Transverse colon (tissue), 4 donors: ENCODE measurements at regions of chr11 and their contacts with region 1.

Region 1: GRCh38 chr11:73779084-73779902 is 8.4 kb upstream of the MRPL48 start:
- DNase-seq: peak; percentile 98
- H3K4me3 ChIP-seq: peak overlapping the region; percentile 46 to 70 (median 58)
- H3K27ac ChIP-seq: peak overlapping the region; percentile 91 to 96 (median 95)
- H3K4me1 ChIP-seq: peaks cover 4 to 10% (median 7%) of the 10 kb centered on the region in 4 donors
- H3K27me3 ChIP-seq: no peaks in the 10 kb centered on the region
- CTCF ChIP-seq: peak in 1 of 5 experiments; percentile 31
- EP300 ChIP-seq: no peak
- POLR2A ChIP-seq: peak; percentile 65

Region 2: DNA sequence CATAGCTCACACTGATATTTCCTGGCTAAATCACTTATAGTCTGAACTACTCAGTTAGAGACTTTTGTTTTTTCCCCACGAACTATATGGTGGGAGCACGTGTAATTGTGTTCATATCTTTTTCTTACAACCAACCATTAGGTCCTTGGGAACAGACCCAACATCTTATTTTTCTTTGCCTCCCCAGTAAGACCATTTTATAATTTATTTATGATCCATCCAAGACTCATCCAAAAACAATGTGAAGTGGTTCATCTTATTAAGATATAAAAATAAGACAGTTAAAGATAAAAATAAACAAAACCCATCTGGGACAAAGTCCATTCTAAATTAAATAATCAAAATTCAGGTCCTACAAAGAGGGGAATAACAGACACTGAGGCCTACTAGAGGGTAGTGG is 272.2 kb before region 1 on chr11:
- in situ Hi-C with region 1: no loop called
- intact Hi-C with region 1: no loop called
- DNase-seq: no peak
- H3K4me3 ChIP-seq: no peak overlapping the region
- H3K27ac ChIP-seq: no peak overlapping the region
- H3K4me1 ChIP-seq: no peaks in the 10 kb centered on the region
- H3K27me3 ChIP-seq: no peaks in the 10 kb centered on the region
- CTCF ChIP-seq: no peak
- EP300 ChIP-seq: no peak
- POLR2A ChIP-seq: no peak

Region 3: DNA sequence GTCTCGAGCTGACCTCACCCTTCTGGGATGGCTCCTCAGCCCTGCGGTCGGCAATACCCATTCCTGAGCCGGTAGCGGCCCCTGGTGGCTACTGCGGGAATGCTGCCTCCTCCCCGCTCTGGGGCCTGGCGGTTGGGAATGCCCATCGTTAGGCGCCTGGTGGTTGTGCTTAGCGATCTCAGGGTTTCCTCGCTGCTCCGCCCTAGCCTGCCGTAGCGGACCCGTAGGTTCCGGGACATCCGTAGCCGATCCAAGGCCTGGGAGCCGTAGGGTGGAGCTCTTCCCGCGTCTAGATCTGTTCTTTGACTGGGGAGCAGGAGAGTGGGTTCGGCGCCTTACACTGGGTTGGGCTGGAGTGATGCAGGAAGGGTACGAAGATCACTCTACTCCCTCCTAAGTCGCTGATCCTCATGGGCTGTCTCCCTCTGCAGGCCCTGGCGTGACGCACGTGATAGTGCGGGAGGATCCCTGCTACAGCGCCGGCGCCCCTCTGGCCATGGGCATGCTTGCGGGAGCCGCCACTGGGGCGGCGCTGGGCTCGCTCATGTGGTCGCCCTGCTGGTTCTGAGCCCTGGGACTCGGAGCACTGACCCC is 118.2 kb before region 1 on chr11:
- in situ Hi-C with region 1: no loop called
- intact Hi-C with region 1: no loop called
- DNase-seq: peak; percentile 91
- H3K4me3 ChIP-seq: peak overlapping the region in 2 of 4 donors; percentile 24 to 43
- H3K27ac ChIP-seq: no peak overlapping the region
- H3K4me1 ChIP-seq: peaks cover 5 to 13% (median 10%) of the 10 kb centered on the region in 4 donors
- H3K27me3 ChIP-seq: no peaks in the 10 kb centered on the region
- CTCF ChIP-seq: peak; percentile 95 to 98 (median 97)
- EP300 ChIP-seq: no peak
- POLR2A ChIP-seq: no peak

Region 4: GRCh38 chr11:73760679-73761402 is 18.5 kb before region 1 on chr11 and contains the start of gene RAB6A:
- in situ Hi-C with region 1: no loop called
- intact Hi-C with region 1: loop called (anchors 1 kb)
- DNase-seq: peak; percentile 100
- H3K4me3 ChIP-seq: peak within 1 kb of the TSS; percentile 86 to 98 (median 90)
- H3K27ac ChIP-seq: peak within 1 kb of the TSS; percentile 94 to 100 (median 98)
- H3K4me1 ChIP-seq: peaks cover 3 to 40% (median 20%) of the 10 kb centered on the region in 4 donors
- H3K27me3 ChIP-seq: no peaks in the 10 kb centered on the region
- CTCF ChIP-seq: peak; percentile 31 to 64 (median 37)
- EP300 ChIP-seq: no peak
- POLR2A ChIP-seq: peak; percentile 90
- total RNA-seq, gene RAB6A: 49.0 to 232 (median 206) TPM